ENCODE measurements at regions of chr22 and their contacts with region 1.

Region 1: GRCh38 chr22:50209893-50210292 is 9.1 kb downstream of the SELENOO start:
- DNase-seq: peak; percentile 77
- H3K4me3 ChIP-seq: no peak overlapping the region
- H3K27ac ChIP-seq: no peak overlapping the region
- H3K4me1 ChIP-seq: no peaks in the 10 kb centered on the region
- H3K27me3 ChIP-seq: no peaks in the 10 kb centered on the region
- CTCF ChIP-seq: peak; percentile 92

Region 2: GRCh38 chr22:50148991-50149721 is 60.7 kb before region 1 on chr22:
- CTCF ChIA-PET with region 1: no interaction called
- POLR2A ChIA-PET with region 1: interaction called, 6 read pairs
- intact Hi-C with region 1: loop called (anchors 1 kb)
- DNase-seq: peak; percentile 57
- H3K4me3 ChIP-seq: no peak overlapping the region
- H3K27ac ChIP-seq: no peak overlapping the region
- H3K4me1 ChIP-seq: no peaks in the 10 kb centered on the region
- H3K27me3 ChIP-seq: no peaks in the 10 kb centered on the region
- CTCF ChIP-seq: peak; percentile 78

Measured in A673 (cell line).